ENCODE measurements at regions of chr2 and their contacts with region 1.

Region 1: DNA sequence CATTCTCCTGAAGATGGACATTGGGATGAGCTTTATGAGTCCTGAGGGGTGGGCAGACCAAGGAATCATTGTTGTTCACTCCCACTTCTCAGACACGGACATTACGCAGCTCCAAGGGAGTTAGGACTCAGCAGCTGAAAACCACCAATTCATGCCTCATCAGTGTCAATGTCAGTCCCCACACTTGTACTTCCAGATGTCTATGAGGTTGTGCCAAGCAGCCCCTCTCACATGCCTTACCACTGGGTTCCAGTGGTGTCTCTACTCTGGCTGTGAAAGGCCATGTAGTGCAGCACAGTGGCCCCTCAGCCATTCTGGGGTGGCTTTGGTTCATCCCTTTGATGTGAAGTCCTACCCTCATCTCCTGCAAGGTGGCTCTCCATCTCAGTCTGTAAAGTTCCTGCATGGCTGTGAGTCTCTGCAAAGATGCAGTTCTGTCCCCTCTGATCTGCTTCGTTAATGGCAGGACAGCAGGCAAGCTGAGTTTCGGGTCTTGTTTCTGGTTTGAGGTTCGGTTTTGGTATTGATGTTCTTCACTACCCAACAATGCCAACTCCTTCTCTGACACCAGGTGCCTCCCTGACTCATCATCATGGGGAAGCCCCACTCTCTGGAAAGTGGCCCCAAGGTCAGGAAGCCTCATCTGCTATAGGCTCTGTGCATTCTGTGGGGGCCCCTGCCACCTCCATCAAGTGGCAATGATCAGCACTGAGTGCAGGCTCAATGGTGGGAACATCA is 14.0 kb upstream of the COL6A3 start:
- DNase-seq: peak in 3 of 9 donors; percentile 4 to 73 (median 63)
- ATAC-seq: peak; percentile 42
- H3K4me3 ChIP-seq: no peak overlapping the region
- H3K4me3 Mint-ChIP-seq: peak overlapping the region in 8 of 10 donors; percentile 56 to 78 (median 66)
- H3K27ac ChIP-seq: no peak overlapping the region
- H3K27ac Mint-ChIP-seq: peak overlapping the region; percentile 11 to 96 (median 88)
- H3K4me1 ChIP-seq: peaks cover 26 to 52% of the 10 kb centered on the region in 2 donors
- H3K4me1 Mint-ChIP-seq: peaks cover 46 to 95% (median 91%) of the 10 kb centered on the region in 7 donors
- H3K27me3 ChIP-seq: no peaks in the 10 kb centered on the region
- H3K27me3 Mint-ChIP-seq: peaks cover 0 to 3% (median 0%) of the 10 kb centered on the region in 5 donors

Region 2: DNA sequence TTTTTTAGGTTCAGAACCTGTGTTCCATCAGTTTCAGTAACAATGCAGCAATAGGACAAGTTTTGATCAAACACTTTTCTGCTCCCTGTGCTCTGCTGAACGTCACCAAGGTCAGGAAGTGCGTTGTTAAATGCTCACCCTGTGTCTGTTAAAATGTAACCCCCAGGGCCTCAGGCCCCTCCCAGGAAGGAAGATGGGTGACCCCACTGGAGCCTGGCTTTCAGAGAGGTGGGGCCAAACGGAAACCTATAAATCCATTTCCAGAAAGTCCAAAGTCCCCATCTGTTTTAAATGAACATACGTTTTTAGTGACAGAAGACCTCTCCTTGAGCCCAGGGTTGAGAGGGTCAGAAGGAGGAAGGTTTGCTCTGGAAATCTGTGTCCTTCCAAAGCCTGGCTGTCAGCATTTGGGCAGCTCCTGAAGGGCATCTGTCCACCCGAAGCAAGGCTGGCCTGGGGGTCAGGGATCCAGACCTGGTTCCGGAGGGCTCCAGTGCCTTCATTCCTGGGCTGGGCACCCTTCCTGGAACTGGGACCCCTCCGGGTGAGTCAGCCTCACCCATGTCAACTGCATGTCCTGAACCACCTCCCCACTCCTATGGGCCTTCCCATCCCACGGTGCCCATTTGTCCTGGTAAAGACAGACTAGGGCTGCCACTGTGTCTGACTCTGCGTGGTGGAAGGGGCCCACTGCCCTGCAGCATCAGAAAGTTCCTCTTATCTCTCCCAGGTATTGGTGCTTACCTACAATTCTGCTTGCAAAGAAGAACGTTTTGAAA is 459.6 kb before region 1 on chr2:
- CTCF ChIA-PET with region 1: no interaction called
- POLR2A ChIA-PET with region 1: no interaction called
- intact Hi-C with region 1: loop called in 1 of 2 experiments (anchors 2 kb)
- DNase-seq: peak in 7 of 9 donors; percentile 71 to 87 (median 82)
- ATAC-seq: peak; percentile 93
- H3K4me3 ChIP-seq: peak overlapping the region; percentile 38
- H3K4me3 Mint-ChIP-seq: peak overlapping the region; percentile 73 to 92 (median 78)
- H3K27ac ChIP-seq: peak overlapping the region; percentile 85
- H3K27ac Mint-ChIP-seq: peak overlapping the region; percentile 80 to 99 (median 95)
- H3K4me1 ChIP-seq: peaks cover 16 to 41% of the 10 kb centered on the region in 2 donors
- H3K4me1 Mint-ChIP-seq: peaks cover 21 to 63% (median 41%) of the 10 kb centered on the region in 7 donors
- H3K27me3 ChIP-seq: no peaks in the 10 kb centered on the region
- H3K27me3 Mint-ChIP-seq: peaks cover 0 to 4% (median 0%) of the 10 kb centered on the region in 5 donors

Region 3: GRCh38 chr2:237154082-237154638 is 273.8 kb before region 1 on chr2:
- CTCF ChIA-PET with region 1: no interaction called
- POLR2A ChIA-PET with region 1: no interaction called
- intact Hi-C with region 1: loop called in 1 of 2 experiments (anchors 2 kb)
- DNase-seq: peak; percentile 21 to 74 (median 60)
- ATAC-seq: peak; percentile 72
- H3K4me3 ChIP-seq: no peak overlapping the region
- H3K4me3 Mint-ChIP-seq: no peak overlapping the region
- H3K27ac ChIP-seq: no peak overlapping the region
- H3K27ac Mint-ChIP-seq: no peak overlapping the region
- H3K4me1 ChIP-seq: no peaks in the 10 kb centered on the region
- H3K4me1 Mint-ChIP-seq: peaks cover 0 to 23% (median 8%) of the 10 kb centered on the region in 7 donors
- H3K27me3 ChIP-seq: no peaks in the 10 kb centered on the region
- H3K27me3 Mint-ChIP-seq: no peaks in the 10 kb centered on the region

Region 4: GRCh38 chr2:237441605-237442274 is 13.8 kb after region 1 on chr2:
- CTCF ChIA-PET with region 1: interaction called, 9 read pairs
- POLR2A ChIA-PET with region 1: interaction called, 34 read pairs
- intact Hi-C with region 1: loop called in 1 of 2 experiments (anchors 1 kb)
- DNase-seq: peak in 8 of 9 donors; percentile 46 to 70 (median 61)
- ATAC-seq: peak; percentile 88
- H3K4me3 ChIP-seq: no peak overlapping the region
- H3K4me3 Mint-ChIP-seq: peak overlapping the region; percentile 40 to 71 (median 56)
- H3K27ac ChIP-seq: peak overlapping the region; percentile 40
- H3K27ac Mint-ChIP-seq: peak overlapping the region; percentile 51 to 87 (median 79)
- H3K4me1 ChIP-seq: peaks cover 10 to 48% of the 10 kb centered on the region in 2 donors
- H3K4me1 Mint-ChIP-seq: peaks cover 36 to 79% (median 71%) of the 10 kb centered on the region in 7 donors
- H3K27me3 ChIP-seq: no peaks in the 10 kb centered on the region
- H3K27me3 Mint-ChIP-seq: no peaks in the 10 kb centered on the region